ENCODE measurements at regions of chr21 and their contacts with region 1.

Region 1: GRCh38 chr21:42527489-42528158 is 14.0 kb downstream of the SLC37A1 start:
- DNase-seq: peak; percentile 73
- ATAC-seq: peak; percentile 88
- H3K4me3 Mint-ChIP-seq: peak overlapping the region; percentile 71
- H3K27ac Mint-ChIP-seq: peak overlapping the region; percentile 90
- H3K4me1 Mint-ChIP-seq: peaks cover 50% of the 10 kb centered on the region
- H3K27me3 Mint-ChIP-seq: no peaks in the 10 kb centered on the region

Region 2: DNA sequence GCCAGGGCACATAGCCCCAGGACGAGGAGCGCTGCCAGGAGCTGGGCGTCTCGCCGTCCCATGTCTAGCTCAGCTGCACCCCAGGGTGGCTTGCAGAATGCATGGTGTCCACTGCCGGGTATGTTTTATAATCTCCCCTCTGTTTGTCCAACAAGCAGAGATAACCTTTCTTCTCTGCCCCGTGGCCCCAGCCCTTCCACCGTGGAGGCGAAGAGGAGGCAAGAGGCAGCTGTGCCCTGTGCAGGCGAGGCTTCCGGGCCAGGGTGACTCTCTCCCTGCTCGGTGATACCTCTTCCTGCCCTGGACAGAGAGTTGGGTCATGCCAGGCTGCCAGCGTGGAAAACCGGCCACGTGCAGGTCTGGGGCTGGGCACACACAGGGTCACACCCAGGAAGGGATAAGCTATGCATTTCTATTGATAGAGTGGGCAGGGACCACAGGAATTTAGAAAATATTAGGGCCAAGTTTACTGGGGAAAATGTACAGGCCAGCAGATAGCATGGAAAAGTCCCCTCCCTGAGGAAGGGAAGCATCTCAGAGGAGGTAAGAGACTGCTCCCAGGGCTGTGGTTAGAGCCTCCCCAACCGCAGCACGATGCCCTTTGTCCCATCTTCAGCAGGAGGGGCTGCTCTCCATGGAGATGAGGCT is 176.6 kb before region 1 on chr21 and contains the start of gene TFF2:
- CTCF ChIA-PET with region 1: no interaction called
- DNase-seq: no peak
- ATAC-seq: no peak
- H3K4me3 Mint-ChIP-seq: no peak within 1 kb of the TSS
- H3K27ac Mint-ChIP-seq: no peak within 1 kb of the TSS
- H3K4me1 Mint-ChIP-seq: no peaks in the 10 kb centered on the region
- H3K27me3 Mint-ChIP-seq: peaks cover 3% of the 10 kb centered on the region
- total RNA-seq, gene TFF2: not detected

Region 3: DNA sequence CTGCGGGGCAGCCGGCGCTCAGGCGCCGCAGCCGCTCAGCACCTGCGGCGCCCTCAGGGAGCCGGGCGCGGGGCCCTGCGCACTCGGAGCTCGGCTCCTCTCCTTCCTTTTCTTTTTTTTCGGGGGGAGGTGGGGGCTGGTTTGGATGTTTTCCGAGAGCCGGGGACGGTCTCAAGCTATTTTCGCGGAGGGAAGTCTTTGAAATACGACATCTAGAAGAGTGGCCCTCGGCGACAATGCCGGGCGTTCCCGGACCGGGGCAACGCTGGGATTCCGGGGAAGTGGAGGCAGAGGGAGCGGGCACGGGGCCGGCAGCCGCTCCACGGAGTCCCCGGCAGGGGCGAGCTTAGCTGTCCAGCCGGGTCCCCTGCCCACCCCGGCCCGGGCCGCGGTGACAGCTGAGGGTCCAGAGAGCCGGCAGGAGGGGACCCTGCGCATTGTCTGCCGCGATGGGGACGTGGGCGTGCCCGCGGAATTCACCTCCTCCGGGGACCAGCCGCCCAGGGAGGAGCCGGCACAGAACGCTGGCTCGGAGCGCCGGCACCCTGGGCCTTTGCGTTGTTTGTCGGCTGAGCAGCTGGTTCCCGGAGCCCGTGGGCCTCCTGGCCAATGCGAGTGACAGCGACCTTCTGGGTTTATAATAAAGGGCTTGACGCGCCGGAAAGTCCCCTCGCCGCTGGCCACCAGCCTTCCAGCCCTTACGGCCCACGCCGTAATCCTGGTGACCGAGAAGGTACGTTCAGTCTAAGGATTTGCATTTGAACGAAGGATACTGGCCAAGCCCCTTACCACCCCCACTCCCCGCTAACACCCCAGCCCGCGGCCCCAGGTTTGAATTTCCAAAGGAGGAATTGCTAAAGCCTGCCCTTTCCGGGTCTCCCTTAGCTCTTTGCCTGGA is 13.4 kb before region 1 on chr21:
- CTCF ChIA-PET with region 1: interaction called, 15 read pairs
- DNase-seq: peak; percentile 68
- ATAC-seq: peak; percentile 73
- H3K4me3 Mint-ChIP-seq: peak overlapping the region; percentile 72
- H3K27ac Mint-ChIP-seq: peak overlapping the region; percentile 69
- H3K4me1 Mint-ChIP-seq: peaks cover 17% of the 10 kb centered on the region
- H3K27me3 Mint-ChIP-seq: peaks cover 20% of the 10 kb centered on the region

Region 4: GRCh38 chr21:42614811-42615659 is 87.4 kb after region 1 on chr21:
- CTCF ChIA-PET with region 1: no interaction called
- DNase-seq: peak; percentile 77
- ATAC-seq: peak; percentile 80
- H3K4me3 Mint-ChIP-seq: no peak overlapping the region
- H3K27ac Mint-ChIP-seq: no peak overlapping the region
- H3K4me1 Mint-ChIP-seq: peaks cover under 1% of the 10 kb centered on the region
- H3K27me3 Mint-ChIP-seq: peaks cover 28% of the 10 kb centered on the region